ENCODE measurements at regions of chr5 and their contacts with region 1.

Region 1: DNA sequence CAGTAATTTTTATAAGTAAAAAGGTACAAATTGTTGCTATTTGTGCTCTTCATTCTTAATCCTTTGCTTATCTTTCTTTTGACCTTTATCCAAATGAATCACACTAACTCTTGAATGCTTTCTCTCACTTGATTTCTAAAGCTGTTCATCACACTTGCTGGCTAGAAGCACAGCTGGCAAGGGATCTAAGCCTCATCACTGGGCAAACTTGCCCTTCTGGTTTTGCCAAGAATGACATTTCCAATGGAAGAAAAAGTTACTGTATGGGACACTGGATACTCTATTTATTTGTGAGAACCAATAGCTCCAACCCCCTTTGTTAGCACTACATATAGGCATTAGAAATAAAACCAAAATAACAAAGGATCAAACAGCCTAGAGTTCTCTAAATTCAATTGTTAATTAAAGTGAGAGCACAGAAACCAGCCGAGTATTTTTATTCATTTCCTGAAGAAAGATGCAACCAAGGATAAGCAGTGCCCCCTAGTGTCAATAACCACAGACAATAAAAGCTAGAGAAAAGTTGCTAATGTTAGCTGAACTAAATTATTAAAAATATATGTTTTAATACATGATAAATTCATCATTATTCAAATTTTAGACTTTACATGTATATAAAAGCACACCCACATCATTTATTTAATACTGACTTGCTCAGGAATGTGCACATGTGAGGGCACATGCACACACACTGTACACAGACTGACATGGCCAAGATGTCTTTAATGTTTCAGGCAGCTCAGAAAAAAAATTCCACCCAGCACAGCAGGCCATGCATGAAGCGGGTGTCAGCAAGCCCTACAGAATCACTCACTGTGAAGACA is 59.8 kb upstream of the POU5F2 start:
- DNase-seq: no peak
- H3K4me3 Mint-ChIP-seq: no peak overlapping the region
- H3K27ac Mint-ChIP-seq: no peak overlapping the region
- H3K4me1 Mint-ChIP-seq: peaks cover 4% of the 10 kb centered on the region
- H3K27me3 Mint-ChIP-seq: peaks cover 2% of the 10 kb centered on the region

Region 2: DNA sequence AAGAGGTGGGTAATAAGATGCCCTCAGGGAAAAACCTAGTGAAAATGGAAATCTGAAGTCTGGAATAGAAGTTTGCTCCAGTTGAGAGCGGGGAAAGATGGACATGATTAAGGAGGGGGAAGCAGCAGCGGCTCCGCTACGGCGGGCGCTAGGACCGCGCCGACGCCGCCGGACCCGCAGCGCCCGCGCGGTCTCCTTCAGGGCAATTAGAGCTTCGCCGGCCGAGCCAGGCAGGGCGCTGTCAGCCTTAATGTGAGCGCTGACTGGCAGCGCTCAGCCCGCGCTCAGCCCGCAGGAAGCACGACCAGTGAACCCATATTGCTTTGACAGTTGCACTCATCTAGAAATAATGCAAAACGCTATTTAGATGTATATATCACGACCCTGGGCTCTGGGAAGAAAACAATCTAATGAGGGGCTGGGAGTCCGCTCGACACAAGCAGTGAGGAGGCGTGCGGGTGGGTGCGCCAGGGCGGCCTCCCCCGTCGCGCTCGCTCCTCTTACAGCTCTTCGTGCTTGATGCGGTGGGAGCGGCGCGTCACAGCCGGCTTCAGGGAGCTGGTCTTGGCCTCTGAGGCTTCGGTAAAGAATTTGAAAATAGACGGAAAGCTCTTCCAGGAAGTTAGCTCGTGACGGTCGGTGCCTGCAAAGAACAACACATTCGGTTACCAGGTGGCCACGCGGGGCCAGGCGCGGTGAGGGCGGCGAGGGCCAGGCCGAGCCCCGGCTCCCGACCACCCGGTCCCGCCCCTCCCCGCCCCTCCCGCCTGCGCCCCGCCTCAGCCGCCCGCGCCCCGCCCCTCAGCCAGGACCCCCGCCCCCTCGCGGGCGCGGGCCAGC is 180.5 kb before region 1 on chr5:
- intact Hi-C with region 1: loop called (anchors 5 kb)
- DNase-seq: peak; percentile 25
- H3K4me3 Mint-ChIP-seq: peak overlapping the region; percentile 90
- H3K27ac Mint-ChIP-seq: peak overlapping the region; percentile 29
- H3K4me1 Mint-ChIP-seq: peaks cover 10% of the 10 kb centered on the region
- H3K27me3 Mint-ChIP-seq: peaks cover 44% of the 10 kb centered on the region

Region 3: DNA sequence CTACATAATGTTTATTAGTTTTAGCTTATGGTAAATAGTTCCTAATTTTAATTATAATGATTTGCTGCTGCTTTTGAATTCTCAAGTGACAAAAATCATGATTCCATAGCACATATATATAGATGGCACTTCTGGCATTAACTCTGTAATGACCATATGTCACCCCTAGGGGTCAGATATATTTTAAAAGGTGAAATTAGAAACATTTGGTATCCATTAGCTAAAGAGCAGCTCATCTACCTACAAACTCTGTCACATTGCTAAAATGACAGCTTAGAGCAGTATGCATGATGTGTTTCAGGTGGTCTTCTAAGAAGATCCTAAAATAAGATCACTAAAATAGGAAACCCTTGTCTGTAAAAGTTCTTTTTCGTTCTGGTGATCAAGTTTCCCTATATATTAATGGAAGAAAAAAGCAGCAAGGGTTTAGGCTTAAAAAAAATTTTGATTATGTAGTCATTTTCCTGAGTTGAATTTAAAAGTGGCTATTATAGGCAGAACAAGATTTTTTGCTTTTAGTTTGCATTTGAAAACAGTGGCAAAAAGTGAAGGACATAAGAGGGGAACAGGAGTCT is 97.9 kb after region 1 on chr5:
- intact Hi-C with region 1: no loop called
- DNase-seq: no peak
- H3K4me3 Mint-ChIP-seq: no peak overlapping the region
- H3K27ac Mint-ChIP-seq: no peak overlapping the region
- H3K4me1 Mint-ChIP-seq: no peaks in the 10 kb centered on the region
- H3K27me3 Mint-ChIP-seq: no peaks in the 10 kb centered on the region

Region 4: DNA sequence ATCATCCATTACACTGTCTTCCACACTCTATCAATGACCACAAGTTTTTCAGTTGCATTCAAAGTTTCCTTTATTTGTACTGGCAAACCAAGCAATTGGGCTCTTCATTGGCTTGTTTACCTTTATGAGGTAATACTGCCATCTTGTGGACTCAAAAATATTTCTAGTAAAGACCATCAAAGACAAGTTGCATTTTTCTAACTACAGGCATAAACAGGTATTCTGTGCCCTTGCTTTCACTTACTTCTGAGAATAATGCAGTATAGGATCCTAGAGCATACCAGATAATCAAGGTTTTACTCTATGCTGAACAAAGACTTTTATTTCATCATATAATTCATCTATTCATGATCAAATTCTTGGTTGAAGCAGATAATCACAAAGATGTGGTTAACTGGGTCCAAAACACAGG is 113.9 kb after region 1 on chr5:
- intact Hi-C with region 1: loop called (anchors 2 kb)
- DNase-seq: no peak
- H3K4me3 Mint-ChIP-seq: no peak overlapping the region
- H3K27ac Mint-ChIP-seq: no peak overlapping the region
- H3K4me1 Mint-ChIP-seq: no peaks in the 10 kb centered on the region
- H3K27me3 Mint-ChIP-seq: no peaks in the 10 kb centered on the region